Panc1 (cell line): ENCODE measurements at regions of chr16 and their contacts with region 1.

Region 1: GRCh38 chr16:24504472-24505345 is 34.7 kb upstream of the RBBP6 start:
- DNase-seq: peak; percentile 61
- ATAC-seq: peak; percentile 93
- H3K4me3 ChIP-seq: no peak overlapping the region
- H3K27ac ChIP-seq: no peak overlapping the region
- H3K4me1 ChIP-seq: no peaks in the 10 kb centered on the region
- H3K27me3 ChIP-seq: no peaks in the 10 kb centered on the region; the same call in 1 of the 2 replicates
- CTCF ChIP-seq: peak; percentile 85

Region 2: GRCh38 chr16:24041826-24042631 is 462.7 kb before region 1 on chr16:
- CTCF ChIA-PET with region 1: interaction called, 14 read pairs
- POLR2A ChIA-PET with region 1: no interaction called
- in situ Hi-C with region 1: no loop called
- intact Hi-C with region 1: loop called (anchors 1 kb)
- DNase-seq: peak; percentile 38
- ATAC-seq: peak; percentile 87
- H3K4me3 ChIP-seq: no peak overlapping the region
- H3K27ac ChIP-seq: no peak overlapping the region
- H3K4me1 ChIP-seq: no peaks in the 10 kb centered on the region; the same call in 1 of the 2 replicates
- H3K27me3 ChIP-seq: peaks cover 4% of the 10 kb centered on the region; the same call in 1 of the 2 replicates
- CTCF ChIP-seq: peak; percentile 94

Region 3: DNA sequence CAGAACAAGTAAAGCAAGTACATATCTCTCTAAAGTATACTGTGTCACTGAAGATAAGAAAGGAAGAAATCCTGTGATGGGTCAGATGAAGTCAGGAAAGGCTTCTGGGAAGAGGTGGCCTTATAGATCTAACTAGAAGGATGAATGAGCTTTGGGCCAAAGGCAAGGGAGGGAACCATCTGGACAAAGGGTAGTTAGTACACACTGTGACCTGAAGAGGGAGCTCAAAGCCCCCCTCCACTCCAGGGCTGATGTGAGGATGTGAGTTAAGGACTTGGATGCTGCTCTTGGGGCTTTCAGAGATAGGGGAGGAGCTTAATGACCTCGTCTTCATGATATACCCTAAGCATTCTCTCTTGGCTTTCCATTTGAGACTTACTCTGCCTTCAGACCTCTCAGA is 433.9 kb before region 1 on chr16:
- CTCF ChIA-PET with region 1: interaction called, 13 read pairs
- POLR2A ChIA-PET with region 1: no interaction called
- in situ Hi-C with region 1: no loop called
- intact Hi-C with region 1: no loop called
- DNase-seq: peak; percentile 17
- ATAC-seq: peak; percentile 82
- H3K4me3 ChIP-seq: no peak overlapping the region
- H3K27ac ChIP-seq: no peak overlapping the region
- H3K4me1 ChIP-seq: no peaks in the 10 kb centered on the region
- H3K27me3 ChIP-seq: peaks cover 9% of the 10 kb centered on the region
- CTCF ChIP-seq: peak; percentile 84

Region 4: DNA sequence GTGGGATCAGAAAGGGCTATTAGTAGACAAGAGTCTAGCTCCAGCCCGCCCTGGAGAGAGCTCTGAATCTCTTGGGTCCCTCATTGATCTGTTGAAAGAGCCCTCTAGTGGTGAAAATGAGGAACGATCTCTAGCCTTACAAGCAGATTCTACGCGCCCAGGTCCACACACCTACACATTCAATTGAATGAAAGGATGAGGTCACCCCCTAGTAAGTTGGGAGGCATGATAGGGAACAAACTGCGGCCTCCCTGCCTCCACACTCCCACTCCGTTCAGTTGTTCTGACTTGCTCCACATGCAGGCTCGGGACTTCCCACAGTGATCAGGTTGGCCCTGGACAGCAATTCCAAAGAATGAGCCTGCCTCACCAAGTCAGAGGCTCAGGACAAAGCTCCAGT is 251.5 kb before region 1 on chr16:
- CTCF ChIA-PET with region 1: interaction called, 7 read pairs
- POLR2A ChIA-PET with region 1: no interaction called
- in situ Hi-C with region 1: no loop called
- intact Hi-C with region 1: loop called (anchors 10 kb)
- DNase-seq: peak; percentile 59
- ATAC-seq: peak; percentile 90
- H3K4me3 ChIP-seq: no peak overlapping the region
- H3K27ac ChIP-seq: no peak overlapping the region
- H3K4me1 ChIP-seq: no peaks in the 10 kb centered on the region
- H3K27me3 ChIP-seq: peaks cover 10% of the 10 kb centered on the region
- CTCF ChIP-seq: peak; percentile 86

Region 5: GRCh38 chr16:24526672-24527460 is 22.2 kb after region 1 on chr16:
- CTCF ChIA-PET with region 1: interaction called, 11 read pairs
- POLR2A ChIA-PET with region 1: no interaction called
- in situ Hi-C with region 1: no loop called
- intact Hi-C with region 1: no loop called
- DNase-seq: no peak
- ATAC-seq: no peak
- H3K4me3 ChIP-seq: no peak overlapping the region
- H3K27ac ChIP-seq: no peak overlapping the region
- H3K4me1 ChIP-seq: peaks cover 3% of the 10 kb centered on the region; the same call in 1 of the 2 replicates
- H3K27me3 ChIP-seq: no peaks in the 10 kb centered on the region
- CTCF ChIP-seq: no peak